ENCODE measurements at regions of chr12 and their contacts with region 1.

Region 1: DNA sequence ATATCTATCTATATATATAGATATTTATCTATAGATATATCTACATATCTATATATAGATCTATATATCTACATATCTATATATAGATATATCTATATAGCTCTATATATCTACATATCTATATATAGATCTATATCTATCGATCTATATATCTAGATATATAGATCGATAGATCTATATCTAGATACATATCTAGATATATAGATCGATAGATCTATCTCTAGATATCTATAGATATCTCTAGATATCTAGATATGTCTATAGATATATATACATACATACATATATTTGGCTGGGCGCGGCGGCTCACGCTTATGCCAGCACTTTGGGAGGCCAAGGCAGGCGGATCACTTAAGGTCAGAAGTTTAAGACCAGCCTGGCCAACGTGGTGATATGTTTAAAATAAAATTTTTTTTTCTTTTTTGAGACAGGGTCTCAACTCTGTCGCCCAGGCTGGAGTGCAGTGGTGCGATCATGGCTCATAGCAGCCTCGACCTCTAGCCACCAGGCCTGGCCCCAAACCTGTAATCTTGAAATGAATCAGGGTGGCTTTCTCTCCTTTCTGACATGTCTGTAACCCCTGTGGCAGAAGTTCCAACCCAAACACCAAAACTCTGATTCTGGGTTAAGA is 18.1 kb downstream of the ARPC3 start:
- DNase-seq: peak in 1 of 3 donors; percentile 63
- ATAC-seq: no peak
- H3K4me3 ChIP-seq: peak overlapping the region; percentile 56
- H3K27ac ChIP-seq: no peak overlapping the region
- H3K4me1 ChIP-seq: no peaks in the 10 kb centered on the region
- H3K27me3 ChIP-seq: no peaks in the 10 kb centered on the region

Region 2: DNA sequence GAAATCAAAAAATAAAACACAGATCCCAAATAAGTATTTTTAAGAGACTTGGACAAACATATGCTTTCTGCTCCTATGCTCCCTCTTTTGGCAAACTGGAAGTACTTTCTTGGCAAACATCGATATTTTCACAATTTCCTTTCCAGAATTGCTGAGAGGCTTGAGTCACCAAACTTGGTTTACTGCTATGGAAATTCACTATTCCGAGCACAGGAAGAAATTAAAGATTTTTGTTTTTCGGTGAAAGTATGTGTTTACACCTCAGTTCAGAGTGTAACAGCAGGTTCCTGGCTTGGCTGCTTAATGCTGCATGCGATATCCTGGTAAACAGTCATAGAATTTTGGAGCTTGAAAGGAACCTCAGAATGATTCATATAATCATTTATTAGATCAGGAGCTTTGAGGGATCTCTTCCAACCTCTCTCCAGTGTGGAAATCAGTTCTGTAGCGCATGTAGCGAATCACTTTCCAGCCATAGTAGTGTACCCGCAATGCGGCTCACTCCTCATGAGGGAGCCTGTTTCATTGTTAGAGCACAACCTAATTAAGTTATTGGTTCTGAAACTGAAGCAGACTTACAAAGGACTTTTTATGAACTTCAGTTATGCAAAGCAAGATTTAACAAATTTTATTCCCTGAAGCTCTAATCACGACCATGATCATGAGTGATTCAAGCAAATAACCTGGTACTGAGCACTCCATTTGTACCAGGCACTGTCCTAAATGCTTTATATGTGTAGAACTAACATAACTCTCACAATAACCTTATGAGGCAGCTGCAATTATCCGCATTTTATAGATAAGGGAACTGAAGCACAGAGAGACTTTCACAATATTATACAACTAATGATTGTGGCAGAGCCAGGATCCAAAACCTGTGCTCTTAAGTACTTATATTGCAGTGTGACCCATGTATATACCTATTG is 207.4 kb before region 1 on chr12:
- intact Hi-C with region 1: loop called in 1 of 4 experiments (anchors 10 kb)
- DNase-seq: no peak
- ATAC-seq: peak; percentile 78 to 82
- H3K4me3 ChIP-seq: peak overlapping the region; percentile 26
- H3K27ac ChIP-seq: peak overlapping the region; percentile 64
- H3K4me1 ChIP-seq: peaks cover 2% of the 10 kb centered on the region
- H3K27me3 ChIP-seq: no peaks in the 10 kb centered on the region

Measured in right cardiac atrium (tissue), 5 donors.